Endothelial cell of umbilical vein (primary cell): ENCODE measurements at regions of chr10 and their contacts with region 1.

Region 1: DNA sequence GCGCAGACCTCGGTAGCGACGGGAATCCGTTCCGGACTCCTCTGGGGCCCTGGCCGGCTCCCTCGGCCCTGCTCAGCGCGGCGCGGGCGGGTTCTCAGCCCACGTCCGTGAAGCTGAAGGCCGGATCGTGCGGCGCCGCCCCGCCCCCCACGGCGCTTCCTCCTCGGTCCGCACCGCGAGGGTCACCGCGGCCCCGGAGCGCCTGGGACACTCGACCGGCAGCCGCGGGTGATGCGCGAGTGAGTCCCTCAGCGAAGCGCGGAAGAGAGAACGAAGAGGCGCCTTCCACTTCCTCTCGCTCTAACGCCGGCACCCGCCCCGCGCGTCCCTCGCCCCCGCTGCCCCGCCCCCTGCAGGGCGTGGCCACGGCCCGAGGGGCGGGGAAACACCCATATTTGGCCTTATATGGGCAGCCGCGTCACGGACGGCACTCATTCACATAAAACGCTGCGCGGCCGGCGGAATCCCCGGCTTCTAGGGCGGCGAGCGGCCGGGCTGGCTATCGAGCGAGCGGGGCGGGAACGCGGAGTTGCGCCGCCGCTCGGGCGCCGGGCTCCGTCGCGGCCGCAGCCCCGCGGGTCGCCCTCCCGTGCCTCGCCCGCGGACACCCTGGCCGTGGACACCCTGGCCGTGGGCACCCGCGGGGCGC is at the start of gene DUSP5:
- DNase-seq: peak; percentile 96
- H3K4me3 ChIP-seq: peak within 1 kb of the TSS; percentile 58 to 81 (median 77)
- H3K27ac ChIP-seq: peak within 1 kb of the TSS; percentile 94
- H3K4me1 ChIP-seq: peaks cover 48% of the 10 kb centered on the region
- H3K27me3 ChIP-seq: no peaks in the 10 kb centered on the region
- CTCF ChIP-seq: no peak
- POLR2A ChIP-seq: peak; percentile 93
- total RNA-seq, gene DUSP5: 12.2 and 12.6 TPM in 2 replicates

Region 2: GRCh38 chr10:110387983-110388687 is 109.4 kb before region 1 on chr10:
- CTCF ChIA-PET with region 1: interaction called, 6 read pairs
- POLR2A ChIA-PET with region 1: interaction called, 5 read pairs
- dilution Hi-C with region 1: no loop called
- intact Hi-C with region 1: loop called (anchors 1 kb)
- DNase-seq: peak; percentile 90
- H3K4me3 ChIP-seq: no peak overlapping the region
- H3K27ac ChIP-seq: peak overlapping the region; percentile 69
- H3K4me1 ChIP-seq: peaks cover 33% of the 10 kb centered on the region
- H3K27me3 ChIP-seq: no peaks in the 10 kb centered on the region
- CTCF ChIP-seq: no peak
- POLR2A ChIP-seq: no peak

Region 3: GRCh38 chr10:110434489-110435096 is 63.0 kb before region 1 on chr10:
- CTCF ChIA-PET with region 1: no interaction called
- POLR2A ChIA-PET with region 1: no interaction called
- dilution Hi-C with region 1: no loop called
- intact Hi-C with region 1: no loop called
- DNase-seq: no peak
- H3K4me3 ChIP-seq: no peak overlapping the region
- H3K27ac ChIP-seq: no peak overlapping the region
- H3K4me1 ChIP-seq: no peaks in the 10 kb centered on the region
- H3K27me3 ChIP-seq: no peaks in the 10 kb centered on the region
- CTCF ChIP-seq: no peak
- POLR2A ChIP-seq: no peak

Region 4: DNA sequence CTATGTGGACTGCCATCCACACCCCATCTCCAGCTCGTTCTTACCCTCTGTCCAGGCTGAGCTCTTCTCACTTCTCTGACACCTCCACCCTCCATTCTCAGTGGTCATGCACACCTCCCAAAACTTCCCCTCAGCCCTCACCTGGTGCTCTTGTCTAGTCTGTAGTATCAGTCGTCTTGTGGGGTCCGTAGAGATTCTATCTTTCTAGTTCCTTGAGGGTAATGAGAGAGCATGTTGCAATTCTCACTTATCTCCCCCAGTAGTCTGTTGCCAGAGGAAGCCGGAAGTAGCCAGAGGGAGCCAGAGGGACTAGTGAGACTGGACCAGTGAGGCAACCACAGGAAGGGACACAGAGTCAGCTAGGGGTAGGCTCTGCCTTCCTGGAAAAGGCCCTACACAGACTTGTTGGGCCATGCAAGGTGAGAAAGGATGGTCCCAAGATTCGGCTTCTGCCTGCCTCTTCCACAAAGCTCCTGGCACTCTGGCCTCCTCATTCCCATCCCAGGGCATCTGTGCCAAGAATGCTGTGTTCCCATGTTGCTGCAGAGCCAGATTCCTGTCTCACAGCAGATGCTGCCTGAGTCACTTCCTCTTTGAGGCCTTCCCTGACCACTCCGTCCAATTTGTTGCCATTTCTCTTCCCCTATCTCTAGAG is 50.5 kb before region 1 on chr10:
- CTCF ChIA-PET with region 1: interaction called, 10 read pairs
- POLR2A ChIA-PET with region 1: interaction called, 3 read pairs
- dilution Hi-C with region 1: no loop called
- intact Hi-C with region 1: loop called (anchors 1 kb)
- DNase-seq: peak; percentile 87
- H3K4me3 ChIP-seq: no peak overlapping the region
- H3K27ac ChIP-seq: peak overlapping the region; percentile 74
- H3K4me1 ChIP-seq: peaks cover 17% of the 10 kb centered on the region
- H3K27me3 ChIP-seq: no peaks in the 10 kb centered on the region
- CTCF ChIP-seq: no peak
- POLR2A ChIP-seq: no peak

Region 5: DNA sequence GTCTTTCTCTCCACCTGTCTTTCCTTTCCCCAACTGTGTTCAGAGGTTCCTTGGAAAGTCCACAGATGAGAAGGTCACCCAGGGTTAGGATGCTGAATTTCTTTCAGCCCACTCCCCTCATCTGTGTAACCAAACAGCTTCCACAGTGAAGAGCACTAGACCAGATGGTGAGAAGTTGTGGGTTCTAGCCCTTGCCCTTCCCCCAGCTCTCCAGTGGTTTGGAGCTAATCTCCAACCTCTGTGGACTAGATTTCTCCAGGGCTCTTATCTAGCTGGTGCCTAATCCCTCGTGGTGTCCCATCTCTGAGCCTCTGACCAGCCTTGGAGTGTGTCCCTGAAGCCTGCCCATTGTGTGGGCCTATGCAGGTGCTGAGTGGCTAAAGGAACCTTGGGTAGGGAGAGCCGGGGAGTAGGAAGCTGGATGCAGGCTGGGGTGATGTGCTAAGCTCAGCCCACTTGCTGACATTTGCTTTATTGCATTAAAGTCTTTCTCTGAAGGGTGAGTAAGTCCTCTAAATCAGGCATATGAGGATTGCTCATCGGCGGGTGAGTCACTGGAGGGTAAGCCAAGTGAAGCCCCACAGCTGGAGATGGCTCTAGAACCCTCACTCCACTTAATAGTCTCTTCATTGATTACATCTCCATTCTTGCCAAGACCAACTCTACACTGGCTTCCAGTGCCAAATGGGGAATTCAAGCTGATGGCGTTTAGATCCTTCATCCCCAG is 15.1 kb after region 1 on chr10:
- CTCF ChIA-PET with region 1: interaction called, 31 read pairs
- POLR2A ChIA-PET with region 1: interaction called, 4 read pairs
- dilution Hi-C with region 1: no loop called
- intact Hi-C with region 1: no loop called
- DNase-seq: peak; percentile 70
- H3K4me3 ChIP-seq: no peak overlapping the region
- H3K27ac ChIP-seq: peak overlapping the region; percentile 94
- H3K4me1 ChIP-seq: peaks cover 39% of the 10 kb centered on the region
- H3K27me3 ChIP-seq: no peaks in the 10 kb centered on the region
- CTCF ChIP-seq: no peak
- POLR2A ChIP-seq: no peak

Region 6: DNA sequence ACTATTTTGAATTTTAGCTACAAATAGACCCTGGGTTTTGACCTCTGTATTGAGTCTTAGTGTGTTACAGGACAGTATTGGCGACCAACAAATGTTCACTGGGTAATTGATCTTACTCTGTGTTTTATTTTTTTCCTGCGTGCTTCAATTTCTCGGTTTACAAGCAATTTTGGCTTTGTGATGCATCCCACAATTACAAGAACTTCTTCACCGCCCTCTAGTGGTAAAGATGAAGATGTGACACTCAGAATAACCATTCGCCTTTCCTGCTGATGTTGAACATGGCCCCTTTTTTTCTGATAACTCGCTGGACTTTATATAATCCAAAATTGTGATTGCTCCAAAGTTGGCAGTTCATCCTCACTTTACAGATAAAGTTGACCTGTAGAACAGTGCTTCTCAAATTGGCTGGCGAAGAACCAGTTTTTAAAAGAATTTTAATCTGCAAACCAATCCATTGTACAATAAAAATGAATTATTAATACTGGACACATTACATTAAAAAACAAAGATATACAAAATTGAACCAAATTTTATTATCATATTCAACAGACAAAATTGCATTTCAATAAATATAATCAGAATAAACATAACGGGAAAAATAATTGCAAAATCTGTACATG is 49.7 kb after region 1 on chr10:
- CTCF ChIA-PET with region 1: interaction called, 89 read pairs
- POLR2A ChIA-PET with region 1: interaction called, 3 read pairs
- dilution Hi-C with region 1: no loop called
- intact Hi-C with region 1: loop called (anchors 1 kb)
- DNase-seq: peak; percentile 61
- H3K4me3 ChIP-seq: no peak overlapping the region
- H3K27ac ChIP-seq: no peak overlapping the region
- H3K4me1 ChIP-seq: peaks cover 13% of the 10 kb centered on the region
- H3K27me3 ChIP-seq: peaks cover 1 to 4% of the 10 kb centered on the region in 2 experiments
- CTCF ChIP-seq: peak; percentile 63 to 68
- POLR2A ChIP-seq: no peak

Region 7: DNA sequence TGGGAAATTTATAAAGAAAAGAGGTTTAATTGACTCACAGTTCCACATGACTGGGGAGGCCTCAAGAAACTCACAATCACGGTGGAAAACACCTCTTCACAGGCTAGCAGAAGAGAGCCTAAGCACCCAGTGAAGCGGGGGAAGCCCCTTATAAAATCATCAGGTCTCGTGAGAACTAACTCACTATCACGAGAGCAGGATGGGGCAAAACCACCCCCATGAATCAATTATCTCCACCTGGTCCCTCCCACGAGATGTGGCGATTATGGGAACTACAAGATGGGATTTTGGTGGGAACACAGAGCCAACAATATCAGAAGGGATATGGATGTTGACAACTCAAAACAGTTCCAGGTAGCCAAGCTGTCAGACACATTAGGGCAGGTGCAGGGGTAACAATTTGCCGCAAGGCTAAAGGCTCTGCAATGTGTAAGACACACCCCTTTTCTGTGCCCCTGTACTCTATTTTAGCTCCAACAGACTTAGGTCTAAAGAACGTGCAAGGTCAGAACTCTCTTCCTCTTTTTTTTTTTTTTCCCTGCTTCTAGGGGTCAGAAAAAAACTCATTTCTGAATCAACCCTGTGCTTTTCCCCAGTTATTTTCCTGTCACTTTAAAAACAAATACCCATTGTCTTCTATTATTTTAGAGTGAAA is 115.9 kb after region 1 on chr10:
- CTCF ChIA-PET with region 1: no interaction called
- POLR2A ChIA-PET with region 1: no interaction called
- dilution Hi-C with region 1: no loop called
- intact Hi-C with region 1: no loop called
- DNase-seq: no peak
- H3K4me3 ChIP-seq: no peak overlapping the region
- H3K27ac ChIP-seq: no peak overlapping the region
- H3K4me1 ChIP-seq: no peaks in the 10 kb centered on the region
- H3K27me3 ChIP-seq: peaks cover 6 to 10% of the 10 kb centered on the region in 2 experiments
- CTCF ChIP-seq: no peak
- POLR2A ChIP-seq: no peak